ENCODE measurements at regions of chr1 and their contacts with region 1.

Region 1: DNA sequence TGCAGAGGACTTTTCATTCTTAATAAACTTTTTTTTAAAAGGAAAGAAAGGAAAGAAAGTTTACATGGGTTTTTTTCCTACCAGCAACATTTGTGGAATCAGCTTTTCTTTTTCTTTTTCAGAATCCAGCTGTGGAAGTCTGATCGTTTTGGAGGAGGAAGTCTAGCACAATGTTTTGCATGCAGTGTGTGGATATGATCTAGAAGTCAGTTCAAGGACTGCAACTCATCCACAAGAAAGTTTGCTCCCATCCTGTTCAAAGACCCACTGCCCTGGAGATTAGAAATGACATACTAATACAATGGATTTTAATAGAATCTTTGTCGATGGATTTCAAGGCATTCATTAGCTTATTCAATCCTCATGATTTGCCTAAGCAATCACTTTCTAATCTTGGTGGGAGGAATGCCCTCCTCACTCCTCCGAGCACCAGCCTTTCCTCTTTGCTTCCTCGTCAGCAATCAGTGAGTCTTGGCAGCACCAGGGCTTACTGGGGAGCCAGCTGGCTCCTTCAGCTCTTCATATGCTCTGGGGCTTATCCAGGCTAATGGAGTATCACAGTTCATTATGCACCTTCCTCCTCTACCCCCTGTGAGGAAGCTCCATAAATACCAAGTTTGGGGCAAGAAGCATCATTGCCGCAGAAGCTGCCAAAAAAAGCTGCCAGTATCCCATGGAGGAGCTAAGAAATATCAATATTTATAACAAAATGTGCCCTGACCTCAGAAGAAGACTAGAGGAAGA is 392.3 kb upstream of the PKN2 start:
- DNase-seq: no peak
- H3K4me3 ChIP-seq: no peak overlapping the region
- CTCF ChIP-seq: no peak

Region 2: GRCh38 chr1:88302843-88303486 is 11.2 kb after region 1 on chr1:
- CTCF ChIA-PET with region 1: interaction called, 15 read pairs
- POLR2A ChIA-PET with region 1: no interaction called
- DNase-seq: peak; percentile 17
- H3K4me3 ChIP-seq: no peak overlapping the region
- CTCF ChIP-seq: peak; percentile 25

Region 3: GRCh38 chr1:88557014-88557413 is 265.2 kb after region 1 on chr1:
- CTCF ChIA-PET with region 1: no interaction called
- POLR2A ChIA-PET with region 1: no interaction called
- DNase-seq: no peak
- H3K4me3 ChIP-seq: no peak overlapping the region
- CTCF ChIP-seq: no peak